ENCODE measurements at regions of chr7 and their contacts with region 1.

Region 1: GRCh38 chr7:130440527-130441365 is at the start of gene CEP41:
- DNase-seq: peak; percentile 97
- H3K4me3 Mint-ChIP-seq: peak within 1 kb of the TSS; percentile 99
- H3K27ac Mint-ChIP-seq: peak within 1 kb of the TSS; percentile 99
- H3K4me1 Mint-ChIP-seq: peaks cover 37% of the 10 kb centered on the region
- H3K27me3 Mint-ChIP-seq: no peaks in the 10 kb centered on the region
- total RNA-seq, gene CEP41: 14.3 and 16.7 TPM in 2 replicates

Region 2: GRCh38 chr7:129122751-129123509 is 1317.8 kb before region 1 on chr7:
- intact Hi-C with region 1: no loop called
- DNase-seq: peak; percentile 71
- H3K4me3 Mint-ChIP-seq: peak overlapping the region; percentile 58
- H3K27ac Mint-ChIP-seq: peak overlapping the region; percentile 91
- H3K4me1 Mint-ChIP-seq: peaks cover 25% of the 10 kb centered on the region
- H3K27me3 Mint-ChIP-seq: peaks cover 11% of the 10 kb centered on the region

Region 3: DNA sequence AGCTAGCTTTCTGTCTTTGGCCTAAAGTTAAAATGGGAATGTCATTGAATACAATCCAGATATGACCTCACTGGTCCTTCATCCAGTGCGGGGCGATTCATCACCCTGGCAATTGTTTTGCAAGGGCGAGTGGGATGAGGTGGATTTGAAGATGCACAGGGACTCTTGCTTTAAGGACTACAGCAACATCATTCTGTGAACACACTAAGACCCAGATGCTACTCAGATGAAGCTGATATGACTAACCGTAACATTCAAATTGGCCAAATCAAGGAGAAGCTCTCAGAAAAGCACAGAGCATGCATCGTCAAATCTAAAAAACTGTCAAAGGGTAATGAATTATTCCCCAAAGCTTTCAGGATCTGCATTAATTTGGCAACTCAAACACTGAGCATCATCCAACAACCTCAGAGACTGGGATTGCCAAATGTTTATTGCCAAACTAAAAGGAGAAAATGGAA is 47.6 kb before region 1 on chr7:
- intact Hi-C with region 1: no loop called
- DNase-seq: no peak
- H3K4me3 Mint-ChIP-seq: no peak overlapping the region
- H3K27ac Mint-ChIP-seq: no peak overlapping the region
- H3K4me1 Mint-ChIP-seq: peaks cover 15% of the 10 kb centered on the region
- H3K27me3 Mint-ChIP-seq: no peaks in the 10 kb centered on the region

Region 4: GRCh38 chr7:130426564-130426963 is 14.2 kb before region 1 on chr7:
- intact Hi-C with region 1: no loop called
- DNase-seq: no peak
- H3K4me3 Mint-ChIP-seq: no peak overlapping the region
- H3K27ac Mint-ChIP-seq: no peak overlapping the region
- H3K4me1 Mint-ChIP-seq: peaks cover 16% of the 10 kb centered on the region
- H3K27me3 Mint-ChIP-seq: no peaks in the 10 kb centered on the region

Region 5: GRCh38 chr7:130458257-130458656 is 17.5 kb after region 1 on chr7:
- intact Hi-C with region 1: loop called (anchors 2 kb)
- DNase-seq: no peak
- H3K4me3 Mint-ChIP-seq: no peak overlapping the region
- H3K27ac Mint-ChIP-seq: peak overlapping the region; percentile 4
- H3K4me1 Mint-ChIP-seq: peaks cover 13% of the 10 kb centered on the region
- H3K27me3 Mint-ChIP-seq: no peaks in the 10 kb centered on the region

Region 6: DNA sequence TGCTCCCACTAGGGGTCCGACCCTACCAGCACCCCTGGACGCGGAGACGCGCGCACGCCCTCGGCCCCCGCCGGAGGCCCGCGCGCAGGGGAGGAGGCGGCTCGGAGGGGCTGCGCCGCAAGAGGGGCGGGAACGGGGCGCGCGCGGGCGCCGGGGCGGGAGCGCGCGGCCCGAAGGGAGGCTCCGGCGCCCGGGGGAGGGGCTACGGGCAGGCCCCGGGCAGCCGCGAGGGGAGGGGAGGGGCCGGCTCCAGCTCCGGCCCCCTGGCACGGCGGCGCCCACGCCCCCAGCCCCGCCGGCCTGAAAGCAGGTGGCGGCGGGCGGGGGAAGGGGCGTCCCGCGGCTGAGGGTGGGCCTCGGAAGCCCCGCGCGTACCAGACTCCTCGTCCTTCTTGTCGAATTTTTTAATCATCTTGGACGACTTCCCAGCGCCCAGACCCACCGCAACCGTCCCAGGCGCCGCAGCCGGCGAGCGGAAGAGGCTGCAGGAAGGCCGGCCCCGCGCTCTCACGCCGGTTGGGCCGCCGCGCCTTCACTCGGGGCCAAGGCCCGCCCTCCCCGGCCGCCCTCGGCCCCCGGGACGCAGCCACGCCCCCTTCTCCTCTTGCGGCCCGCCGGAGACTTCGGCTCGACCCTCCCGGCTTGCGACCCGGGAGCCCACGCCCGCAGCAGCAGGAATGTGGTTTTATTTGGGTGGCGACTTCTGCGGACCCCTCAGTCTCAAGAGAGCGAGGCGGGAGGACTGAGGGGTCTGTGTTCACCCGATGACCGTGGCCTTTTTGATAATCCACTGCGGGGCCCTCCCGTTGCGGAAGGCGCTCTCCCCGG is 227.7 kb after region 1 on chr7 and contains the start of gene COPG2:
- intact Hi-C with region 1: loop called (anchors 5 kb)
- DNase-seq: peak; percentile 95
- H3K4me3 Mint-ChIP-seq: peak within 1 kb of the TSS; percentile 85
- H3K27ac Mint-ChIP-seq: peak within 1 kb of the TSS; percentile 84
- H3K4me1 Mint-ChIP-seq: peaks cover 19% of the 10 kb centered on the region
- H3K27me3 Mint-ChIP-seq: peaks cover 12% of the 10 kb centered on the region
- total RNA-seq, gene COPG2: 21.4 and 22.5 TPM in 2 replicates